IMR-90 (cell line): ENCODE measurements at regions of chrX and their contacts with region 1.

Region 1: DNA sequence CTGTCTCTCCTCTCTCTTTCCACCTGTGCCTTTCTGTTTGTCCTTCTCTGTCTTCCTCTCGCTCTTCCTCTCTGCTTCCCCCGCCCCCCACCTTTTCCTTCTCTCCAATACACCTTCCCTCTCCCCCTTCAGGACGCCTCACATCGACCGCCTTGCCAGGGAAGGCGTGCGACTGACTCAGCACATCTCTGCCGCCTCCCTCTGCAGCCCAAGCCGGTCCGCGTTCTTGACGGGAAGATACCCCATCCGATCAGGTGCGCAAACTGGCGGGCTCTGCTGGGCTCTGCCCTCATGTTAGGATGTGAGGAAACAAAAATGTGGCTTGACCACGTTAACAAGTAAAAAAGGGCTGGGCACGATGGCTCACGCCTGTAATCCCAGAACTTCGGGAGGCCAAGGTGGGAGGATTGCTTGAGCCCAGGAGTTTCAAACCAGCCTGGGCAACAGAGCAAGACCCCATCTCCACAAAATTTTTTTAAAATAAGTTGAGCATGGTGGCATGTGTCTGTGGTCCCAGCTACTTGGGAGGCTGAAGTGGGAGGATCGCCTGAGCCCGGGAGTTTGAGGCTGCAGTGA is 35.2 kb downstream of the ARSF start:
- DNase-seq: no peak
- ATAC-seq: no peak
- H3K4me3 ChIP-seq: no peak overlapping the region
- H3K27ac ChIP-seq: no peak overlapping the region
- H3K4me1 ChIP-seq: no peaks in the 10 kb centered on the region
- H3K27me3 ChIP-seq: no peaks in the 10 kb centered on the region
- CTCF ChIP-seq: no peak
- POLR2A ChIP-seq: no peak
- RAD21 ChIP-seq: no peak

Region 2: GRCh38 chrX:2320580-2321327 is 755.8 kb before region 1 on chrX:
- CTCF ChIA-PET with region 1: no interaction called
- POLR2A ChIA-PET with region 1: no interaction called
- dilution Hi-C with region 1: no loop called
- in situ Hi-C with region 1: no loop called
- intact Hi-C with region 1: no loop called
- DNase-seq: peak; percentile 77
- ATAC-seq: peak; percentile 84
- H3K4me3 ChIP-seq: no peak overlapping the region
- H3K27ac ChIP-seq: peak overlapping the region; percentile 62
- H3K4me1 ChIP-seq: peaks cover 5% of the 10 kb centered on the region; the same call in 1 of the 2 replicates
- H3K27me3 ChIP-seq: no peaks in the 10 kb centered on the region
- CTCF ChIP-seq: no peak
- POLR2A ChIP-seq: no peak
- RAD21 ChIP-seq: no peak

Region 3: GRCh38 chrX:2848871-2849301 is 227.6 kb before region 1 on chrX:
- CTCF ChIA-PET with region 1: no interaction called
- POLR2A ChIA-PET with region 1: no interaction called
- dilution Hi-C with region 1: no loop called
- in situ Hi-C with region 1: no loop called
- intact Hi-C with region 1: no loop called
- DNase-seq: peak; percentile 54
- ATAC-seq: peak; percentile 85
- H3K4me3 ChIP-seq: no peak overlapping the region
- H3K27ac ChIP-seq: peak overlapping the region; percentile 72
- H3K4me1 ChIP-seq: peaks cover 2% of the 10 kb centered on the region; the same call in 1 of the 2 replicates
- H3K27me3 ChIP-seq: no peaks in the 10 kb centered on the region
- CTCF ChIP-seq: no peak
- POLR2A ChIP-seq: no peak
- RAD21 ChIP-seq: no peak

Region 4: DNA sequence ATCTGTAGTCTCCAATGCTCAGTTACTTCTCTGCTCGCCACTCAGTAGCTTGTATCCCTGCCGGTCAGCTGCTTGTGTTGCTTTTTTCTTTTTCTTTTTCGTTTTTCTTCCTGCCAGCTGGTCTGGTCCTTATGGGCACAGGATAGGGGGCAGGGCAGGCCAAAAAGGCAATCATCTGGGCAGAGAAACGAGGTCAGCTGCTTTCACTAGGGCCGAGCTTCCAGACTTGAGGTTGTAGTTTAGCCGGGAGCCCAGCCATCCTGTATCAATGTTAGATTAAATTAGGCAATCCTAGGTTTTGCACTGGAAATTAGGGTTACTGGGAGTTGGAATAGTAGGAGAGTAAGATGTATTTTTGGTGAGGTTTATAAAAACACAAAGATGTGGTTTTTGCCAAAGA is 31.8 kb before region 1 on chrX:
- CTCF ChIA-PET with region 1: no interaction called
- POLR2A ChIA-PET with region 1: no interaction called
- dilution Hi-C with region 1: no loop called
- in situ Hi-C with region 1: no loop called
- intact Hi-C with region 1: loop called (anchors 1 kb)
- DNase-seq: no peak
- ATAC-seq: no peak
- H3K4me3 ChIP-seq: no peak overlapping the region
- H3K27ac ChIP-seq: no peak overlapping the region
- H3K4me1 ChIP-seq: no peaks in the 10 kb centered on the region
- H3K27me3 ChIP-seq: no peaks in the 10 kb centered on the region
- CTCF ChIP-seq: no peak
- POLR2A ChIP-seq: no peak
- RAD21 ChIP-seq: no peak